ENCODE measurements at regions of chr13 and their contacts with region 1.

Region 1: DNA sequence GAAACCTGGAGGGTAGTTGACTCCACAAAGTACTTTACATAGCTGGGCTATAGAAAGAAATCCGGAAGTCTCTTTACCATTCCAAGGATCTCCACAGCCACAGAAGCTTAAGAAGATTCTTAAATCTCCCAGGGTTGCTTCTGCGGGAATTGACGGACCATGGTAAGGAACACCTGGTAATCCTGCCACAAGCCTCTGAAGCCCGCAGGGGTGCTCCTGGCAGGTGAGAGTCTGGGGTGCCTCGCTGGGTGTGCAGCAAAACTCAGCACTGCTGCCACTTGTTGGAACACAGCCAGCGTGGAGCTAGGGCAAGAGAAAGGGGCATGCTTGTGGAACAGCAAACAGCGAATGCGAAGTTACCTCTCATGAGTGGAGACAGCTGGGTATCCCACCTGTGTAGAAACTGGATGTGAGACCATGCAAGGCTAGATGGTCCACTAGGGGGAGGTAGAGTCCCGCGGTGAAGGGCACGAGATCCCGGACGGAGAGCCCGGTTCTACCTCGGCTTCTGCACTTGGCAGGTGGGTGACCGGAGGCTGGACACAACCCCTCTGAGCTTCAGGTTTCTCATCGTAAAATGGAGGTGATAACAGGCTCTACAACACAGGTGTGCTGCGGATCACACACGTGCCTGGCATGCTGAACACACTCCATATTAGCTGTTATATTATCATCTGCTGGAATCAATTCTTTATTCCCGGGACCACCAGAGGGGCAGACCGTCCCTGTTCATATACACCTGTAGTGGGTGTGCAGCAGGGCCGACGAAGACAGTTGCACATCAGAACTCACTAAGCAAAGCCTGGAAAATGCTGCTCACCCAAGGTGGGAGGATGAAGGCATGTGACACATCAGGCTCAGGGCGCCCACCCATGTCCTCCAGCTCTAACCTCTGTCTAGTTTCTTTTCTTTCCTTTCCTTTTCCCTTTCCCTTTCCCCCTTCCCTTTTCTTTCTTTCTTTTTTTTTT is 24.1 kb upstream of the UBAC2 start:
- DNase-seq: peak; percentile 69 to 83 (median 72)
- H3K4me3 ChIP-seq: peak overlapping the region; percentile 49
- H3K4me3 Mint-ChIP-seq: peak overlapping the region; percentile 12 to 86 (median 77)
- H3K27ac ChIP-seq: no peak overlapping the region
- H3K27ac Mint-ChIP-seq: peak overlapping the region in 7 of 8 donors; percentile 4 to 94 (median 53)
- H3K4me1 ChIP-seq: peaks cover 33% of the 10 kb centered on the region
- H3K4me1 Mint-ChIP-seq: peaks cover 39 to 49% (median 42%) of the 10 kb centered on the region in 3 donors
- H3K27me3 ChIP-seq: no peaks in the 10 kb centered on the region
- H3K27me3 Mint-ChIP-seq: peaks cover 0 to 2% of the 10 kb centered on the region in 2 donors

Region 2: DNA sequence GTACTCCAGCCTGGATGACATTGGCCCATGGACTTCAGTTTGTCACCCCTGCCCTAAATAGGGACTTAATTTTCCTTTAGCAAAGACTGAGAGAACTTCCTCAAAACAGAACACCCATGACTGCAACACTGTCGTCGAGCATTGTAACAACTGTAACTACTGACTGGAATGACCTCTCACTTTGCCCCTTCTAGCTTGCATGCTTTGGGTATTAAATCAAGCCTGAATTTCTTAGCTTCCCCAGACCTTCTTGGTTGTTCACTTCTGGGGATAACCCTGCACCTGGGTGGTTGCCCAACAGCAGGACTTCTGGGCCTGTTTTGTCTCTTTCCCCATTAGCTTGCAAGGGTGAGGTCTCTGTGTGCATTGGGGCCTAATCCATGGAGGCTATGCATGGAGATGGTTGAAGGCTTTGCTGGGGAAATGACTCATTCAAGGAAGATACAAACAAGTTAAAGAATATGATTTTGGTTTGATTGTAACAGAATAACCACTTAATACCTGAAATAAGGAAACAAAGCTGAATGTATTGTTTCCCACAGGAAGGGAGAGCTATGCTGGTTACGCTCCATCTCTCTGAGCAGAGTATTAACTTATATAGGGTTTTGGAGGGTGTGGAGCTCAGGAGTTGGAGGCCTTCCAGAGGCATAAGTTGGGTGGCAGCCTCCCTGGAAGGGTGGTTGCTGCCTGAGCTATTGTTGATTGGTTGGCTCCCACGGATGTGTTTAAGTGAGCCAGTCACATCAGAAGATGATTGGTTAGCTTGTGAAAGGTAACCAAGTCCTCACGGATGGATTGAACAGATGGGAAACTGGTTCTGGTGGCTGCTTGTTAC is 10.6 kb before region 1 on chr13:
- CTCF ChIA-PET with region 1: interaction called, 11 read pairs
- POLR2A ChIA-PET with region 1: no interaction called
- DNase-seq: no peak
- H3K4me3 ChIP-seq: no peak overlapping the region
- H3K4me3 Mint-ChIP-seq: no peak overlapping the region
- H3K27ac ChIP-seq: no peak overlapping the region
- H3K27ac Mint-ChIP-seq: peak overlapping the region in 1 of 8 donors; percentile 41
- H3K4me1 ChIP-seq: no peaks in the 10 kb centered on the region
- H3K4me1 Mint-ChIP-seq: no peaks in the 10 kb centered on the region
- H3K27me3 ChIP-seq: no peaks in the 10 kb centered on the region
- H3K27me3 Mint-ChIP-seq: peaks cover 0 to 1% of the 10 kb centered on the region in 2 donors

Region 3: DNA sequence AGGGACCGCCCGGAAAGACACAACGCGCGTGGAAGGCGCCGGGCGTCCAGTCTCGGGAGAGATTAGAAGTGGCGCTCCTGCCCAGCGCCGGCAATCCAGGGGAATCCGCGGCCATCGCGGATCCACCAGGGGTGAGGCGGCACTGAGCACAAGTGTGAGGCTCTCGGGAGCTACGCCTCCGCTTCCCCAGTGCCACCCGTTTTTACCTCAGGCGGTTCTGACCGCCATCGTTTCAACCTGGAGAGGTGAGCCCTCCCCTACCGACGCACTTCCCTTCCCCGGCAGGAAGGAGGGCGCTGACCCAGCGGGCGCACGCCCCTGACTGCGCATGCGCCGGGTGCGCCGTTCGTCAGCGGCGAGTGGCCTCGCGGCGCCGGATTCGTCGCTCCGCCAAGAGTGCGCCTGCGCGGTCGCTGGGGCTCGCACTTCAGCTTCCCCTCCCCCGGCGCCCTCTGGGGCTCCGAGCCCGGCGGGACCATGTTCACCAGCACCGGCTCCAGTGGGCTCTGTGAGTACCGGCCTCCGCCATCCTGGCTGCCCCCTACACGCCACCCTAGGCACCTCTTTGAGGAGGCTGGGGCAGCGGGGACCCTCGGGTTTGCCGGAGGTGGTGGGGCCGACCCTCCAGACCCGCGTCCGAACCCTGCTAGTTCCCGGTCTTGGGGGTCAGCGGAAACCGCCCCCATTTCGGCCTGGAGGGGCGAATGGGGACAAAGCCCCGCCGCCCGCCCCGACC is 24.0 kb after region 1 on chr13 and contains the start of gene UBAC2:
- CTCF ChIA-PET with region 1: interaction called, 41 read pairs
- POLR2A ChIA-PET with region 1: interaction called, 6 read pairs
- DNase-seq: peak; percentile 95 to 99 (median 98)
- H3K4me3 ChIP-seq: peak within 1 kb of the TSS; percentile 84
- H3K4me3 Mint-ChIP-seq: peak within 1 kb of the TSS; percentile 89 to 98 (median 95)
- H3K27ac ChIP-seq: peak within 1 kb of the TSS; percentile 95
- H3K27ac Mint-ChIP-seq: peak within 1 kb of the TSS; percentile 80 to 100 (median 98)
- H3K4me1 ChIP-seq: peaks cover 46% of the 10 kb centered on the region
- H3K4me1 Mint-ChIP-seq: peaks cover 54 to 71% (median 66%) of the 10 kb centered on the region in 3 donors
- H3K27me3 ChIP-seq: no peaks in the 10 kb centered on the region
- H3K27me3 Mint-ChIP-seq: peaks cover 0 to 4% of the 10 kb centered on the region in 2 donors
- total RNA-seq, gene UBAC2: 62.3 to 63.7 TPM

Region 4: DNA sequence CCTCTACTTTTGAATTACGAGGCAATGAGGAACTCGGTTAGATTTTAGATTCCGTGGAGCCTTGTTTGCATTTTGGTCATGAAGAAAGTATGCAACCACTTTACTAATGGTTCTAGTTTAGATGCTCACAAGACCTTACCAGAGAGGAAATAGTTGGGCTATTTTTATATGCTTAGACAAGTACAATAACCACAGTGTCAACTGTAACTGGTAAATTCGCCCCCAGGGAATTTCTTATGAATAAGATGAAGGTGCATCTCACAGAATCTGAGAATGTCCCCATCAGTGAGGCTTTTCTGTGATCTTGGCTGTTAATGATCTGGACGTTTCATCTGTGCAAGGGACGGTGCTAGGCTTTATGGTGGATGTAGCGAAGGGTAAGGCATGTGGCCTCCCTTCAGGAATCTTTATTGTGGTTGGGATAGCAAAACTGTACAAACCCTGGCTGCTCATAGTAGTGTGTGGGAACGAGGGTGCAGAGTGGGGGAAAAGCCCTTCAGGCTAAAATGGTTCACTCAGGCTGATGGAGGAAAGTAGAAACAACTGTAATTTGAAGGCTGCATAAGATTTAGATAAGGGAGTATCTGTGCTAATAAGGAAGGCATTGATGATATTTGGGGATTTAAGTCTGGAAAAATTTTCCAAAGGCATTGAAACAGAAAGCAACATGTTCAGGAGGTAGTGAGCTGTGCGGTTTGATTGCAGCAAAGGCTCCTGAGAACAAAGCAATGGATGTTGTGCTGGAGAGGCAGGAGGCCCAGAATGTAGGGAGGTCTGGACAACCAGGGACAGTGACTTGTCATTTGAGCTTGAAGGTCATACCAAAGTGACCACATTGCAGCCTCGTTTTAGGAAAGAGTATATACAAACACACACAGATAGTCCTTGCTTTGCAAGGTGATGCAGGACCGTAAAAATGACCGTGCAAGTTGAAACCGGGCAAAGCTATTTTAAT is 52.4 kb after region 1 on chr13:
- CTCF ChIA-PET with region 1: interaction called, 19 read pairs
- POLR2A ChIA-PET with region 1: no interaction called
- DNase-seq: peak in 1 of 5 donors; percentile 42
- H3K4me3 ChIP-seq: peak overlapping the region; percentile 23
- H3K4me3 Mint-ChIP-seq: peak overlapping the region; percentile 71 to 91 (median 80)
- H3K27ac ChIP-seq: no peak overlapping the region
- H3K27ac Mint-ChIP-seq: peak overlapping the region; percentile 83 to 97 (median 93)
- H3K4me1 ChIP-seq: peaks cover 77% of the 10 kb centered on the region
- H3K4me1 Mint-ChIP-seq: peaks cover 74 to 92% (median 86%) of the 10 kb centered on the region in 3 donors
- H3K27me3 ChIP-seq: no peaks in the 10 kb centered on the region
- H3K27me3 Mint-ChIP-seq: no peaks in the 10 kb centered on the region

Region 5: GRCh38 chr13:99307648-99308339 is 131.2 kb after region 1 on chr13:
- CTCF ChIA-PET with region 1: interaction called, 14 read pairs
- POLR2A ChIA-PET with region 1: no interaction called
- DNase-seq: peak in 2 of 5 donors; percentile 33 to 76
- H3K4me3 ChIP-seq: peak overlapping the region; percentile 50
- H3K4me3 Mint-ChIP-seq: peak overlapping the region; percentile 88 to 95 (median 94)
- H3K27ac ChIP-seq: peak overlapping the region; percentile 71
- H3K27ac Mint-ChIP-seq: peak overlapping the region; percentile 89 to 98 (median 94)
- H3K4me1 ChIP-seq: peaks cover 77% of the 10 kb centered on the region
- H3K4me1 Mint-ChIP-seq: peaks cover 75 to 85% (median 84%) of the 10 kb centered on the region in 3 donors
- H3K27me3 ChIP-seq: no peaks in the 10 kb centered on the region
- H3K27me3 Mint-ChIP-seq: no peaks in the 10 kb centered on the region

Region 6: DNA sequence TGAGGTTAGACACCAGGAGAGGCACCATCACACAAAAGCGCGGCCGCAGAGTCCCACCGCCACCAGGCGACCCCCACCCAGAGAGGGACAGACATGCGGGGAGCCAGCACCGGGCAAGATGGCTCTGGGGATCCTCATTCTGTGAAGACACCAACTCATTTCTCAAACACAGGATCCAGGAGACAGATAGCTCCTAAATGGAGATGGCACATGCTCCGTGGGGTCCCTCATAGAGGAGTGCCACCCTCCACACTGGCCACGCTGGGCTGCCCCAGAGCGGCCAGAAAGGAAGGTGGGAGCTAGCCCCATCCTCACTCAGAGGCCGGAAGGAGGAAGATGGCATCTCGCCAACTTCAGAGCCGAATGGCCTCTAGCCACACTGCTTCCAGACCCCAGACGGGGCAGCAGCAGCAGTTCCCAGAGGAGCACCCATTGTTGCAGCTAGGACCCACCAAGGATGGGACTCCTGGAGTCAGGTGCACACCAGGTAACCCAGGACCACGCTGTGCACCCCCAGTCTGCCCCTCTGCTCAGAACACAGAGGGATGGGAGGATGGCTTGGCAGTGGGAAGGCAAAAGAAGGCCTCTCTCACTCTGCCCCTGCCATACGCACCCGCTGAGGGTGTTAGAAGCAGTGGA is 716.4 kb after region 1 on chr13:
- CTCF ChIA-PET with region 1: no interaction called
- POLR2A ChIA-PET with region 1: interaction called, 11 read pairs
- DNase-seq: no peak
- H3K4me3 ChIP-seq: no peak overlapping the region
- H3K4me3 Mint-ChIP-seq: no peak overlapping the region
- H3K27ac ChIP-seq: no peak overlapping the region
- H3K27ac Mint-ChIP-seq: no peak overlapping the region
- H3K4me1 ChIP-seq: peaks cover 7% of the 10 kb centered on the region
- H3K4me1 Mint-ChIP-seq: peaks cover 10 to 29% (median 19%) of the 10 kb centered on the region in 3 donors
- H3K27me3 ChIP-seq: peaks cover 26% of the 10 kb centered on the region
- H3K27me3 Mint-ChIP-seq: peaks cover 26 to 35% of the 10 kb centered on the region in 2 donors